ENCODE measurements at regions of chr12 and their contacts with region 1.

Region 1: GRCh38 chr12:49588721-49589516 is 16.5 kb downstream of the FAM186B start:
- DNase-seq: no peak
- ATAC-seq: no peak
- H3K4me3 ChIP-seq: no peak overlapping the region
- H3K4me3 Mint-ChIP-seq: no peak overlapping the region
- H3K27ac ChIP-seq: no peak overlapping the region
- H3K27ac Mint-ChIP-seq: no peak overlapping the region
- H3K4me1 ChIP-seq: no peaks in the 10 kb centered on the region
- H3K4me1 Mint-ChIP-seq: no peaks in the 10 kb centered on the region
- H3K27me3 ChIP-seq: no peaks in the 10 kb centered on the region
- H3K27me3 Mint-ChIP-seq: no peaks in the 10 kb centered on the region

Region 2: DNA sequence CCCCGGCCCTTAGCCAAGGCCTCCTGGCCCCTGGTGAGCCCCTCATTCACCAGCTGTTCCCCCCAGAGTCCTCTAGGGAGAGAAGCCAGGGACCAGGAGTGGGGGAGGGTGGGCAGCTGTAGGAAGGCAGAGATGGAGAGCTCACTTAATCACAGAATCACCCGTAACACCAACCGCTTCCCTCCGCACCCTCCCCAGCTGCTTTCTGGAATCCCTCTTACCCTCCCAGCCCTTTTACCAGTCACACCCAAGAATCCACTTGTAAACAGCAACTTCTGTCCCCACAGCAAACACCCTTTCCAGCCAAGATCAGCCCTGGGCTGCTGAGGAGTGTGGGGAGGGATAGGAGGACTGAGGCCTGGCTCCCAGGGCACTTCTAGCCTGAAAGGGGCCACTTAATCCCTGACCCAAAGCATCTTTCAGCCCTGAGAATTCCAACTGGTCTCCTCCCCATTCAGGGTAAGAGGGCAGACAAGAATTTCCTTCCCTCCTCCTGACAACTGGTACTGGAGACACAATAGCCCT is 220.5 kb after region 1 on chr12:
- CTCF ChIA-PET with region 1: no interaction called
- POLR2A ChIA-PET with region 1: interaction called in 1 of 2 experiments, 16 read pairs
- DNase-seq: no peak
- ATAC-seq: no peak
- H3K4me3 ChIP-seq: no peak overlapping the region
- H3K4me3 Mint-ChIP-seq: no peak overlapping the region
- H3K27ac ChIP-seq: no peak overlapping the region
- H3K27ac Mint-ChIP-seq: no peak overlapping the region
- H3K4me1 ChIP-seq: no peaks in the 10 kb centered on the region
- H3K4me1 Mint-ChIP-seq: peaks cover 4 to 11% (median 6%) of the 10 kb centered on the region in 3 donors
- H3K27me3 ChIP-seq: no peaks in the 10 kb centered on the region
- H3K27me3 Mint-ChIP-seq: no peaks in the 10 kb centered on the region